ENCODE measurements at regions of chr1 and their contacts with region 1.

Region 1: DNA sequence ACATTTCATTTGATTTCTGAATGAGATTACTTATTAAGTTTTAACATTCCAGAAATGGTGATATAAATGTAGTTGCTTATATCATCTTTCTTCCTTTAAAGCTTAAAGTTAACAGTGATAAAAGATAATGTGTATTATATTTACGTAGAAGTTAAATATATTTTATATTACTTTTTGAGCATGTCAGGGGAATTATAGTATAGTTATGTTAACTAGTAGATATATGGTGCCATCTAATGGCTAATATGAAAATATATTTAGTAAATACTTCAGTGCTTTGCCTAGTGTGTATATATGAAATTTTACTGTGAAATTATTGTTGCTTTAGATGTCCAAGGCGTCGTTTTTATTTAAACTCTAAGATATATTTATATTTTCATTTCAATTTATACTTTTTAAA is 51.5 kb downstream of the SYT14 start:
- DNase-seq: peak; percentile 1
- H3K4me3 ChIP-seq: no peak overlapping the region
- H3K27me3 ChIP-seq: no peaks in the 10 kb centered on the region
- CTCF ChIP-seq: no peak

Region 2: DNA sequence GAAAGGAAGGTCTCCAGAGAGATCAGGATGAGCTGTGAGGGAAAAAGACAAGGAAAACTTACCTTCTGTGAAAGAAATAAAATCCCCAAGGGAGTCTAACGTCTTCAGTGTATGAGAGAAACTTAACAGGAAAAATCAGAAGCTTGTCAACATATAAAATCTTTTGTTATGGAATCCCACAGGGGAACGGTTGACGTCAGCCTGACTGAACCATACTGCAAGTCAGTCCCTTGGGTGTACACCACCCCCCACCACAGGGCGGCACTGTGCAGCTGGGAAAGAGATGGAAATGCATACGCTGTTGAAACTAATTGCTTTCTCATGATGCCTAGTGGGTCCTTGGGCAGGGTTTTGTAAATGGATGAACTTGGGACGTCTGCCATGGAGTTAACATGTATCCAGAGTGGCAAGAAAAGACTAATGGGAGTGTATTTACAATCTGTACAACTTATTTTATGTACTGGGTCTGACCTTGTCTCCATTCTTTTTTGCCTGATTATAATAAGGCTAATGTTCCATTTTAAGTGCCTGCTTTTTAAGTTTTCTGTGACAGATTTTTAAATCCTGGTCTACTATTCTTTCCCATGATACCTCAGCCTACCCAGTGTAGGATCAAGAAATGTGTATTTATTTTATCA is 139.1 kb before region 1 on chr1:
- CTCF ChIA-PET with region 1: interaction called, 17 read pairs
- POLR2A ChIA-PET with region 1: no interaction called
- DNase-seq: no peak
- H3K4me3 ChIP-seq: no peak overlapping the region
- H3K27me3 ChIP-seq: no peaks in the 10 kb centered on the region
- CTCF ChIP-seq: peak; percentile 81

Region 3: GRCh38 chr1:209860293-209860881 is 129.1 kb before region 1 on chr1:
- CTCF ChIA-PET with region 1: interaction called, 46 read pairs
- POLR2A ChIA-PET with region 1: no interaction called
- DNase-seq: no peak
- H3K4me3 ChIP-seq: no peak overlapping the region
- H3K27me3 ChIP-seq: peaks cover 3% of the 10 kb centered on the region
- CTCF ChIP-seq: peak; percentile 89

Region 4: GRCh38 chr1:209875515-209875914 is 114.0 kb before region 1 on chr1:
- CTCF ChIA-PET with region 1: interaction called, 13 read pairs
- POLR2A ChIA-PET with region 1: no interaction called
- DNase-seq: no peak
- H3K4me3 ChIP-seq: no peak overlapping the region
- H3K27me3 ChIP-seq: no peaks in the 10 kb centered on the region
- CTCF ChIP-seq: peak; percentile 69

Region 5: DNA sequence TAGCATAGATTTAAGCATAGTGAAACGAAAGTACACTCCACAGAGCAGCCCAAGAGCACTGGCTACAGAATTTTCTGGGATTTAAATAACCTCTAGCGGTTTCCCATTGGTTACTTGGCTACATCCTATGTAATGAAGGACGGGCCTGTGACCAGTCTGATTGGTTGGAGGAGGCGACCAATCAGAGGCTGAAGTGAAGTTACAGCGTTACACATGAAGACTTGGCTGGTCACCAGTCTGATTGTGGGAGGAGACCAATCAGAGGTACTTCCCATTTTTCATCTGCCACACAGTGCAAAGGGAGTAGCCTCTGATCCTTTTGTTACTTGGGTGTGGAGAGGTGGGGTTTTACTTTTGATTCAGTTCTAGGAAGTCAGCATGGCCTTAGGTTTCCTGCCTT is 100.3 kb after region 1 on chr1:
- CTCF ChIA-PET with region 1: no interaction called
- POLR2A ChIA-PET with region 1: no interaction called
- DNase-seq: no peak
- H3K4me3 ChIP-seq: no peak overlapping the region
- H3K27me3 ChIP-seq: no peaks in the 10 kb centered on the region
- CTCF ChIP-seq: no peak